GM12878 (cell line): ENCODE measurements at regions of chr11 and their contacts with region 1.

Region 1: DNA sequence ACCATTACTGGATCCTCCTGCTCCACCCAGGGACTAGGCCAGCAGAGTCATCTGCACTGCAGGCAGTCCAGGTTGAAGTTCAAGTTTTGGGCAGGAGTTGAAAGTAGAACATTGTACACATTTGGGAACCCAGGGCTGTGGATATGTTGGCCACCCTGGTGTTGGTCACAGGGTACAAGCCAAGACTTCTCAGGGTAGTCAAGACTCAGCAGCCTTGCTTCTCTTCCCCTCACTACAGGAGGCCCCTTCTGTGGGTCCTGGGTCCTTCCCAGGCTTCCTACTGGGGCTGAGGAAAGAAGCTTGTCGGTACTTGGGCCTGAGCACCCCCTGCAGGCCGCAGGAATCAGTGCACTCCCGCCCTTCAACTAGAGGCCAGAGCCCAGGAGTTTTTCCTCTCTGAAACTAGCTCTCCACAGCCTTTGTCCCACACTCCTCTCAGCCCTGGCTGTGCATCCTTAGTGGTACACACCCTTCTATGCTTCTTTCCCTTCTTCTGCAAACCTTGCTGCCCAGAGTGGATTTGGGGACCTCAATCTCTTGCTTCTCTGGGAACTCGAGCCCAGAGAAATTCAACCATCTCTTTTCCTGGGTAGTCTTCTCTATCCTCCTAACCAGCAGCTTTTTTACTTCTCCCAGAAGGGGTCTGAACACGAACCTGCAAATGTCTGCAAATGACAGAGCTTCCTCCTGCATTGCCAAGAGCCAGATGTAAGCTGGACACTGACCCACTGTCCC is 2.6 kb upstream of the HPX start:
- DNase-seq: no peak
- ATAC-seq: peak; percentile 91
- H3K4me3 ChIP-seq: no peak overlapping the region
- H3K27ac ChIP-seq: no peak overlapping the region
- H3K4me1 ChIP-seq: no peaks in the 10 kb centered on the region
- H3K27me3 ChIP-seq: no peaks in the 10 kb centered on the region
- CTCF ChIP-seq: peak; percentile 85 to 89 (median 87)
- EP300 ChIP-seq: no peak
- POLR2A ChIP-seq: no peak
- RAD21 ChIP-seq: peak; percentile 91

Region 2: DNA sequence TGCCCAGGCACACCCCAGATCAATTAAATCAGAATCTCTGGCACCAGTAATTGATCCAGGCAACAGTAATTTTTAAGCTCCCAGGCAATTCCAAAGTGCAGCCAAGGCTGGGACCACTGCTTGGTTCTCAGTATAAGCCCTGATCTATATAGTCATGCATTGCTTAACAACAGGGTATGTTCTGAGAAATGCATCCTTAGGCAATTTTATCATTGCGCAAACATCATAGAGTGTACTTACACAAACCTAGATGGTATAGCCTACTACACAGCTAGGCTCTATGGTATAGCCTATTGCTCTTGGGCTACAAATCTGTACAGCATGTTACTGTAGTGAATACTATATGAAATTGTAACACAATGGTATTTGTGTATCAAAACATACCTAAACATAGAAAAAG is 238.7 kb before region 1 on chr11:
- CTCF ChIA-PET with region 1: no interaction called
- POLR2A ChIA-PET with region 1: no interaction called
- RAD21 ChIA-PET with region 1: no interaction called
- SMC1A ChIA-PET with region 1: no interaction called
- in situ Hi-C with region 1: no loop called
- intact Hi-C with region 1: no loop called
- DNase-seq: no peak
- ATAC-seq: no peak
- H3K4me3 ChIP-seq: no peak overlapping the region
- H3K27ac ChIP-seq: no peak overlapping the region
- H3K4me1 ChIP-seq: peaks cover 9% of the 10 kb centered on the region
- H3K27me3 ChIP-seq: no peaks in the 10 kb centered on the region
- CTCF ChIP-seq: no peak
- EP300 ChIP-seq: no peak
- POLR2A ChIP-seq: no peak
- RAD21 ChIP-seq: no peak

Region 3: DNA sequence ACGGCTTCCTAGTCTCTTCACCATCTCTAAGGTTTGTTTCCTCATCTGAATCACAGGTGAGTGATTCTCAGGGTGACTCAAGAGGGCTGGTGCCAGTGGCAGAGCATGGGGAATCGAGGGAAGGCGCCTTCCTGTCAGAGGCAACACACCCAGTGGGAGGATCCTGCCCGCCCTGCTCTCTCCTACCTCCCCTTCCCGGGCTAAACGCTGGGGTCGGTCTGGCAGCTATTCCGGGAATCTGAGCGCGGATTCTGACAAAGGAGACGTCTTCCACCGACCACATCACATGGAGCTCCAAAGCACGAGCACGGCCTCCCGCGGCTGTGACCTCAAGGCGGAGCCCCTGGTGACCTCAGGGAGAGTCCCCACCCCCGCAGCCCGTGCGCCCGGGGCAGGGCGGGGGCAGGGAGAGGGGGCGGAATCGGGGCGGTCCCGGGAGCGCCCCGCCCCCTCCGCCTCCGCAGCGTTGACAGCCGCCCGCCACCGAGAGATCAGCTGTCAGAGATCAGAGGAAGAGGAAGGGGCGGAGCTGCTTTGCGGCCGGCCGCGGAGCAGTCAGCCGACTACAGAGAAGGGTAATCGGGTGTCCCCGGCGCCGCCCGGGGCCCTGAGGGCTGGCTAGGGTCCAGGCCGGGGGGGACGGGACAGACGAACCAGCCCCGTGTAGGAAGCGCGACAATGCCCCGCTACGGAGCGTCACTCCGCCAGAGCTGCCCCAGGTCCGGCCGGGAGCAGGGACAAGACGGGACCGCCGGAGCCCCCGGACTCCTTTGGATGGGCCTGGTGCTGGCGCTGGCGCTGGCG is 53.3 kb before region 1 on chr11 and contains the start of gene SMPD1:
- CTCF ChIA-PET with region 1: interaction called, 22 read pairs
- POLR2A ChIA-PET with region 1: no interaction called
- RAD21 ChIA-PET with region 1: interaction called, 4 read pairs
- SMC1A ChIA-PET with region 1: interaction called, 8 read pairs
- in situ Hi-C with region 1: no loop called
- intact Hi-C with region 1: no loop called
- DNase-seq: peak; percentile 66
- ATAC-seq: peak; percentile 98
- H3K4me3 ChIP-seq: peak within 1 kb of the TSS; percentile 90
- H3K27ac ChIP-seq: peak within 1 kb of the TSS; percentile 64
- H3K4me1 ChIP-seq: peaks cover 6% of the 10 kb centered on the region
- H3K27me3 ChIP-seq: no peaks in the 10 kb centered on the region
- CTCF ChIP-seq: no peak
- EP300 ChIP-seq: peak; percentile 21 to 41; a peak in 1 of 4 replicates
- POLR2A ChIP-seq: peak; percentile 88
- RAD21 ChIP-seq: no peak
- polyA plus RNA-seq, gene SMPD1: 1.4 to 3.8 TPM

Region 4: DNA sequence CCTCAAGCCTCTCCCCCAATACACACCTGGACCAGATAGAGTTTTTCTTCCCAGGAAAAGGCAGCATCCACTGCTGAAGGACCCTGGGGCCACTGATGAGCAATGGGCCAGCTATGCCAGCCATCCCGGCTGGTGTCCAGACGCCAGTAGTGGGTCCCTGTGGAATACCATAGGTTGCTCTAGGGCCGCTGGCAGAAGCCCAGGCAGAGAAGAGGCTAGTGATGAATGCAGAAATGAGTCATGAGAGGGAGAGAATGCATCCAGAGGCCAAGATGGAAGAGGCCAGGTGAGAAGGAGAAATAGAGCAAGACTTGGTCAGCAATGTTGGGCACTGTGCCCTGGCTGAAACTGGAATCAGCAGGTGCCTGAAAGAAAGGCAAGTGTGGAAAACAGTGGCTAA is 11.6 kb before region 1 on chr11:
- CTCF ChIA-PET with region 1: interaction called, 20 read pairs
- POLR2A ChIA-PET with region 1: no interaction called
- RAD21 ChIA-PET with region 1: interaction called, 3 read pairs
- SMC1A ChIA-PET with region 1: interaction called, 7 read pairs
- in situ Hi-C with region 1: no loop called
- intact Hi-C with region 1: no loop called
- DNase-seq: no peak
- ATAC-seq: no peak
- H3K4me3 ChIP-seq: no peak overlapping the region
- H3K27ac ChIP-seq: no peak overlapping the region
- H3K4me1 ChIP-seq: peaks cover 13% of the 10 kb centered on the region
- H3K27me3 ChIP-seq: no peaks in the 10 kb centered on the region
- CTCF ChIP-seq: no peak
- EP300 ChIP-seq: no peak
- POLR2A ChIP-seq: no peak
- RAD21 ChIP-seq: no peak

Region 5: GRCh38 chr11:6473481-6474422 is 30.3 kb after region 1 on chr11 and contains the start of gene TRIM3:
- CTCF ChIA-PET with region 1: interaction called, 20 read pairs
- POLR2A ChIA-PET with region 1: no interaction called
- RAD21 ChIA-PET with region 1: no interaction called
- SMC1A ChIA-PET with region 1: interaction called, 4 read pairs
- in situ Hi-C with region 1: no loop called
- intact Hi-C with region 1: no loop called
- DNase-seq: no peak
- ATAC-seq: peak; percentile 85
- H3K4me3 ChIP-seq: peak within 1 kb of the TSS; percentile 75
- H3K27ac ChIP-seq: no peak within 1 kb of the TSS
- H3K4me1 ChIP-seq: peaks cover 15% of the 10 kb centered on the region
- H3K27me3 ChIP-seq: no peaks in the 10 kb centered on the region
- CTCF ChIP-seq: no peak
- EP300 ChIP-seq: no peak
- POLR2A ChIP-seq: peak; percentile 72
- RAD21 ChIP-seq: no peak
- polyA plus RNA-seq, gene TRIM3: 0.34 to 0.55 TPM

Region 6: GRCh38 chr11:6489306-6489705 is 45.9 kb after region 1 on chr11:
- CTCF ChIA-PET with region 1: interaction called, 11 read pairs
- POLR2A ChIA-PET with region 1: no interaction called
- RAD21 ChIA-PET with region 1: interaction called, 3 read pairs
- SMC1A ChIA-PET with region 1: interaction called, 4 read pairs
- in situ Hi-C with region 1: no loop called
- intact Hi-C with region 1: no loop called
- DNase-seq: no peak
- ATAC-seq: no peak
- H3K4me3 ChIP-seq: no peak overlapping the region
- H3K27ac ChIP-seq: no peak overlapping the region
- H3K4me1 ChIP-seq: peaks cover 5% of the 10 kb centered on the region; the same call in 1 of the 2 replicates
- H3K27me3 ChIP-seq: no peaks in the 10 kb centered on the region
- CTCF ChIP-seq: no peak
- EP300 ChIP-seq: no peak
- POLR2A ChIP-seq: 0 out of 2 replicates have a peak, but pooled peaks have one; percentile 4
- RAD21 ChIP-seq: no peak

Region 7: GRCh38 chr11:6568191-6568918 is 124.9 kb after region 1 on chr11:
- CTCF ChIA-PET with region 1: no interaction called
- POLR2A ChIA-PET with region 1: no interaction called
- RAD21 ChIA-PET with region 1: no interaction called
- SMC1A ChIA-PET with region 1: no interaction called
- in situ Hi-C with region 1: no loop called
- intact Hi-C with region 1: no loop called
- DNase-seq: no peak
- ATAC-seq: no peak
- H3K4me3 ChIP-seq: no peak overlapping the region
- H3K27ac ChIP-seq: no peak overlapping the region
- H3K4me1 ChIP-seq: no peaks in the 10 kb centered on the region
- H3K27me3 ChIP-seq: no peaks in the 10 kb centered on the region
- CTCF ChIP-seq: no peak
- EP300 ChIP-seq: no peak
- POLR2A ChIP-seq: no peak
- RAD21 ChIP-seq: no peak

Region 8: DNA sequence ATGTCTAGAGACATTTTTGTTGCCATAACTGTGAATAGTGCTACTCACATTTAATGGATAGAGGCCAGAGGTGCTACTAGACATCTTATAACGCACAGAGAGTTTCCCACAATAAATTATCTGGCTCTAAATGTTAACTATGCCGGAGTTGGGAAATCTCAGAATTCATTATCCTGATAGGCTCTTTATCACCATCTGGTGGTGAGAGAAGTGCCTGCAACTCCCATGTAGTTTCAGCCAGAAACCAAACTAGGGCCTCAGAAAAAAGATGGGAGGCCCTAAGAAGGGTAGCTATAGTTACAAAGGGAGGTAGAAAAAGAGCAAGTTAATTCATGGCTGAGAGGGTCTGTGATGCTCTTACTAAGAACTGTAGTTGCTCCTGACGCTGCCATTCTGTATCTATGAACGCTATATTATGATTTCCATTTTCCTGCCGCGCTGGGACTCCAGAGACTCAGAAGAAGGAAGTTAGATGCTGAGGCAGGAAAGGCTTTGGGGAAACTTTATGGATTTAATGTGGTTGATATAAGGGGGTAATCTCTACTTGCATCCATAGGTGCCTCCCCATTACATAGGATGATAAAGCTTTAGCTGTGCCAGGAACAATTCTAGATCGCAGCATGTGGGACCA is 262.6 kb after region 1 on chr11:
- CTCF ChIA-PET with region 1: interaction called, 23 read pairs
- POLR2A ChIA-PET with region 1: no interaction called
- RAD21 ChIA-PET with region 1: interaction called, 4 read pairs
- SMC1A ChIA-PET with region 1: no interaction called
- in situ Hi-C with region 1: no loop called
- intact Hi-C with region 1: no loop called
- DNase-seq: no peak
- ATAC-seq: peak; percentile 83
- H3K4me3 ChIP-seq: no peak overlapping the region
- H3K27ac ChIP-seq: no peak overlapping the region
- H3K4me1 ChIP-seq: no peaks in the 10 kb centered on the region
- H3K27me3 ChIP-seq: no peaks in the 10 kb centered on the region
- CTCF ChIP-seq: peak; percentile 77 to 92 (median 84)
- EP300 ChIP-seq: no peak
- POLR2A ChIP-seq: no peak
- RAD21 ChIP-seq: peak; percentile 71